Heart left ventricle (tissue), 16 donors: ENCODE measurements at regions of chr6 and their contacts with region 1.

Region 1: GRCh38 chr6:138817822-138818308 is 22.0 kb downstream of the ECT2L start:
- DNase-seq: no peak
- ATAC-seq: peak in 2 of 4 donors; percentile 9 to 26
- H3K4me3 ChIP-seq: no peak overlapping the region
- H3K27ac ChIP-seq: no peak overlapping the region
- H3K4me1 ChIP-seq: peaks cover 0 to 11% (median 5%) of the 10 kb centered on the region in 12 donors
- H3K27me3 ChIP-seq: no peaks in the 10 kb centered on the region
- CTCF ChIP-seq: no peak
- POLR2A ChIP-seq: no peak

Region 2: GRCh38 chr6:138773177-138774091 is 44.4 kb before region 1 on chr6 and contains the start of gene CCDC28A:
- intact Hi-C with region 1: no loop called
- DNase-seq: peak; percentile 93 to 97 (median 95)
- ATAC-seq: peak; percentile 94 to 97 (median 97)
- H3K4me3 ChIP-seq: peak within 1 kb of the TSS; percentile 64 to 92 (median 82)
- H3K27ac ChIP-seq: peak within 1 kb of the TSS; percentile 93 to 99 (median 98)
- H3K4me1 ChIP-seq: peaks cover 0 to 23% (median 14%) of the 10 kb centered on the region in 12 donors
- H3K27me3 ChIP-seq: no peaks in the 10 kb centered on the region
- CTCF ChIP-seq: peak in 1 of 12 donors; percentile 10
- POLR2A ChIP-seq: peak in 1 of 2 donors; percentile 60
- total RNA-seq, gene CCDC28A: 4.6 to 13.6 (median 7.8) TPM

Region 3: GRCh38 chr6:138912308-138912707 is 94.4 kb after region 1 on chr6:
- intact Hi-C with region 1: loop called in 3 of 10 experiments (anchors 10 kb)
- DNase-seq: no peak
- ATAC-seq: no peak
- H3K4me3 ChIP-seq: no peak overlapping the region
- H3K27ac ChIP-seq: no peak overlapping the region
- H3K4me1 ChIP-seq: peaks cover 0 to 3% (median 0%) of the 10 kb centered on the region in 12 donors
- H3K27me3 ChIP-seq: no peaks in the 10 kb centered on the region
- CTCF ChIP-seq: no peak
- POLR2A ChIP-seq: no peak

Region 4: GRCh38 chr6:138987640-138988468 is 170.0 kb after region 1 on chr6 and contains the start of gene REPS1:
- intact Hi-C with region 1: loop called (anchors 1 to 5 kb)
- DNase-seq: peak; percentile 92 to 95 (median 94)
- ATAC-seq: peak; percentile 95 to 98 (median 98)
- H3K4me3 ChIP-seq: peak within 1 kb of the TSS; percentile 80 to 99 (median 90)
- H3K27ac ChIP-seq: peak within 1 kb of the TSS; percentile 80 to 96 (median 92)
- H3K4me1 ChIP-seq: peaks cover 0 to 42% (median 23%) of the 10 kb centered on the region in 12 donors
- H3K27me3 ChIP-seq: no peaks in the 10 kb centered on the region
- CTCF ChIP-seq: peak; percentile 98 to 100 (median 99)
- POLR2A ChIP-seq: peak in 1 of 2 donors; percentile 62
- total RNA-seq, gene REPS1: 35.2 to 48.2 (median 38.3) TPM

Region 5: DNA sequence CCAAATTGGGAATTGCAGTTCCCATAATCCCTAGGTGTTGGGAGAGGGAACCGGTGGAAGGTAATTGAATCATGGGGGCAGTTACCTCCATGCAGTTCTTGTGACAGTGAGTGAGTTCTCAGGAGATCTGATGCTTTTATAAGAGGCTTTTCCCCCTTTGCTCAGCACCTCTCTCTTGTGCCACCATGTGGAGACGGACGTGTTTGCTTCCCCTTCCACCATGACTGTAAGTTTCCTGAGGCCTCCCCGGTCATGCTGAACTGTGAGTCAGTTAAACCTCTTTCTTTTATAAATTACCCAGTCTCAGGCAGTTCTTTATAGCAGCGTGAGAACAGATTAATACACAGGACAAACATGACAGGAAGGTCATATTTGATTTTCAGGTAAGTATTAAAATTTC is 291.7 kb after region 1 on chr6:
- intact Hi-C with region 1: loop called in 6 of 10 experiments (anchors 2 to 10 kb)
- DNase-seq: no peak
- ATAC-seq: peak in 3 of 4 donors; percentile 42 to 59 (median 45)
- H3K4me3 ChIP-seq: no peak overlapping the region
- H3K27ac ChIP-seq: no peak overlapping the region
- H3K4me1 ChIP-seq: no peaks in the 10 kb centered on the region
- H3K27me3 ChIP-seq: no peaks in the 10 kb centered on the region
- CTCF ChIP-seq: peak; percentile 17 to 55 (median 36)
- POLR2A ChIP-seq: no peak

Region 6: GRCh38 chr6:139219271-139219729 is 401.4 kb after region 1 on chr6:
- intact Hi-C with region 1: loop called in 1 of 10 experiments (anchors 10 kb)
- DNase-seq: peak; percentile 85 to 90 (median 86)
- ATAC-seq: peak; percentile 98 to 100 (median 99)
- H3K4me3 ChIP-seq: no peak overlapping the region
- H3K27ac ChIP-seq: peak overlapping the region; percentile 30 to 79 (median 62)
- H3K4me1 ChIP-seq: peaks cover 0 to 15% (median 6%) of the 10 kb centered on the region in 12 donors
- H3K27me3 ChIP-seq: no peaks in the 10 kb centered on the region
- CTCF ChIP-seq: peak; percentile 64 to 91 (median 82)
- POLR2A ChIP-seq: peak in 1 of 2 donors; percentile 62

Region 7: GRCh38 chr6:139369568-139370282 is 551.9 kb after region 1 on chr6:
- intact Hi-C with region 1: loop called in 9 of 10 experiments (anchors 5 to 10 kb)
- DNase-seq: no peak
- ATAC-seq: no peak
- H3K4me3 ChIP-seq: peak overlapping the region in 8 of 12 donors; percentile 5 to 98 (median 92)
- H3K27ac ChIP-seq: peak overlapping the region; percentile 61 to 100 (median 97)
- H3K4me1 ChIP-seq: peaks cover 2 to 47% (median 34%) of the 10 kb centered on the region in 12 donors
- H3K27me3 ChIP-seq: no peaks in the 10 kb centered on the region
- CTCF ChIP-seq: peak; percentile 70 to 83 (median 76)
- POLR2A ChIP-seq: no peak